ENCODE measurements at regions of chr6 and their contacts with region 1.

Region 1: GRCh38 chr6:24064082-24064481 is 61.9 kb upstream of the NRSN1 start:
- DNase-seq: peak; percentile 29 to 47
- H3K4me3 ChIP-seq: no peak overlapping the region
- H3K27ac ChIP-seq: no peak overlapping the region
- H3K4me1 ChIP-seq: peaks cover 8 to 10% of the 10 kb centered on the region in 2 donors
- H3K27me3 ChIP-seq: no peaks in the 10 kb centered on the region
- CTCF ChIP-seq: peak in 4 of 6 experiments; percentile 55 to 87 (median 74)
- POLR2A ChIP-seq: no peak

Region 2: DNA sequence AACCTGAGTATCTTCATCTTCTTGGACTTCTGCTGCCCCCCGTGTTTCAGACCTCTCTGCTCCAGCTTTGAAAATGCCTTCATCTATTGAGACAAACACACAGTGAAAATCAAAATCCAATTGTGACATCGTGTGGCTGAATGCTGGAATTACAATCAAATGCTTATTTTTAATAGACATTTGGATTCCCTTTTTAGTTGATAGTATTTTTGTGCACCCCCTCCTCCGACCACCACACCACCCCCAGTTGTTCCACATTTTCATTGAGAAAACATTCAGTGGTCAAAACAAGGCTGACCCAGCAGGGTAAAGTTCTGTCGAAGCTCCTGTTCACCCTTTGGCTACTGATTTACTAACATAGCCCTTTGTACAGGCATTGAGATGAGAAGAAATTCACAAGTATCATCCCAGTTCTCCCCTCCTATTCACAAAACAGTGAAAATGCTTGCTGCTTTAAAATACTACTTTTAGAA is 141.0 kb after region 1 on chr6:
- intact Hi-C with region 1: loop called (anchors 5 kb)
- DNase-seq: peak; percentile 13 to 15
- H3K4me3 ChIP-seq: no peak overlapping the region
- H3K27ac ChIP-seq: no peak overlapping the region
- H3K4me1 ChIP-seq: no peaks in the 10 kb centered on the region
- H3K27me3 ChIP-seq: no peaks in the 10 kb centered on the region
- CTCF ChIP-seq: peak; percentile 32 to 82 (median 52)
- POLR2A ChIP-seq: no peak

Region 3: DNA sequence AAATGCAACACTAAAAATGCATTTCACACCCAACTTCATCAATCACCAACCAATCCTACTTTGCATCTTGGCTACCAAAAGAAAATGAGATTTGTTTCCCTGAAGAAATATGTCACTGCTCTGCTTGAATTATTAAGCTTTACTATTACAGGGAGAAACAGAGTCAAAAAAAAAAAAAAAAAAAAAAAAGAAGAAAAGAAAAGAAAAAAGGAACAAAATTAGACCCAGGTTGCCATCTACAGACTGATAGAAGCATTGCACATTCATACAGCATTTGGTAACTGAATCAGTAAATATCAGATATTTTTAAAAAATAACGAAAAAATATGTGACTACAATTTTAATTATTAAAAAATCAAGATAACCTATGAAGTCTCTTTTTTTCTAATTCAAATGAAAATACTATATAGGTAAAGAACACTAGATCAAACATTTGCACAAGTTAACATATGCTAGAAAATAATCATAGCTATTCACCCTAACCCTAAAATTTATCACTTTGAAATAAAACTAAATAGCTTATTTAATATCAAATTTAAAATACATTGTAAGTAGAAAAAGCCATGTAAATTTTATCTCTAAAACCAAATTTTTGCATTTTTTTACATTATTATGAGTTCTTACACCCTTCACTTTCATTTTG is 210.5 kb after region 1 on chr6:
- intact Hi-C with region 1: loop called (anchors 5 kb)
- DNase-seq: no peak
- H3K4me3 ChIP-seq: no peak overlapping the region
- H3K27ac ChIP-seq: peak overlapping the region in 1 of 3 donors; percentile 72
- H3K4me1 ChIP-seq: peaks cover 19 to 25% of the 10 kb centered on the region in 2 donors
- H3K27me3 ChIP-seq: no peaks in the 10 kb centered on the region
- CTCF ChIP-seq: peak; percentile 18 to 97 (median 42)
- POLR2A ChIP-seq: no peak

Region 4: DNA sequence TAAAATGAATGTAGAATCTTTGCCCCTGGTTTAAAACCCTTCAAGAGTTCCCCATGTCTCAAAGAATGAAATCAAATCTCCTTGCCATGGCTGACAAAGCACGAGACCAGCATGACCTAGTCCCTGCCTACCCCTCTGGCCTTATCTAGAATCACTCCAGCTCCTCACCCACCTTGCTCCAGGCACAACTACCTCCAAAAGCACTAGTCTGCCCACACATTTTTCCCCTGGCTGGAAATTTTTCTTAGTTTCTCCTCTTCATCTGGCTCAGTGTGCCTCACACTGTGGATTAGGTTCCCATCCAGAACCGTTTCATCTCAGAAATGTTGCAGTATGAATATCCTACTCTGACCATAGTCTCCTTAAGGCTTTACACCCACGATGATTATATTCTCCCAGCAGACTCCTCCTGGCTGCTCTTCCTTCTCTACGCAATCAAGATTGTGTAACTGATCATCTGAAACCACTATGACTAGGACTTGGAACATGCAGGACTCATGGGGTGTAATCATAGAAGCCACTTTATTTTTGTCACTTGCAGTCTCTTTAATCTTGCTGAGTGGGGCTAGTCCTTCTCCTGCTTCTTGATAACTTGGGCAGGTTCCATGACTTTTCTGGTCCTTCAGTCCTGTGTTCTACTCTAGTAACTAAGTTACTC is 330.8 kb after region 1 on chr6:
- intact Hi-C with region 1: loop called (anchors 10 kb)
- DNase-seq: no peak
- H3K4me3 ChIP-seq: no peak overlapping the region
- H3K27ac ChIP-seq: no peak overlapping the region
- H3K4me1 ChIP-seq: no peaks in the 10 kb centered on the region
- H3K27me3 ChIP-seq: no peaks in the 10 kb centered on the region
- CTCF ChIP-seq: no peak
- POLR2A ChIP-seq: no peak